ENCODE measurements at regions of chr9 and their contacts with region 1.

Region 1: DNA sequence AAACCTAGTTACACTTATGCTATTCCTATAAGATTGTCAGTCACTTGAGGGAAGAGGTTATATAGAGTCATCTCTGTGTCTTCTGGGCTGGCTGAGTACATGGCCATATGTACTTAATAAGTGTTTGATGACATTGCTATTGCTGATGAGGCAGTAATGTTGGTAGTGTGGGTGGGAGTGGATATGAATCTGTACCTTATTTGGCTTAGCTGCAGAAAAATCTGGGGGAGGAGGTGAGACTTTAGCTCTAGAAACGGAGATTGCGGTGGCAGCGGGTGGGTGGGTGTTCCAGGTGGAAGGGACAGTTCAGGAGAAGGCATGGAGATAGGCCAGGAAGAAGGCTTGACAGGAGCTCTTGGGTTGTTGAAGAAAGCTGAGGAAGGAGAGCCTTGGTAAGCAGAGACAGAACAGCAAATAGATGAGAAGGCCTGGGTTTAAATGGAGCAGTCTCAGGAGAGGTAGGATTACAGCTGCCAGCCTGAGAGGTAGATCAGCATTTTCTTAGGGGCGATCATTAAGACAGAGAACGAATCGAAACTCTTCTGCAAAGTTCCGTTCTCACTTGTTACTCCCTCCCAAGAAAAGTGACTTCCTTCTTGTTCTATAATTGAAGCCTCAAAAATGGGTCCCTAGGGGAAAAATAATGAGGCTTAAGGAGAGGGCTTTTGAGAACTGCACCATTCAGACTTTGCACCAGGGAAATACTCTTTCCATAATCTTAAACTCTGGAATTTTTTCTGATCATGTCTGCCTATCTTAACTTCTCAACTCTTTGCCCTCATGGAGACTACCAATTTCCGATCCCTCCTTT is 160.5 kb downstream of the UNC13B start:
- DNase-seq: no peak
- ATAC-seq: no peak
- H3K4me3 ChIP-seq: no peak overlapping the region
- H3K27ac ChIP-seq: no peak overlapping the region
- H3K4me1 ChIP-seq: no peaks in the 10 kb centered on the region
- H3K27me3 ChIP-seq: no peaks in the 10 kb centered on the region
- CTCF ChIP-seq: no peak
- POLR2A ChIP-seq: no peak
- RAD21 ChIP-seq: no peak

Region 2: GRCh38 chr9:34665381-34666250 is 656.7 kb before region 1 on chr9:
- CTCF ChIA-PET with region 1: no interaction called
- POLR2A ChIA-PET with region 1: no interaction called
- RAD21 ChIA-PET with region 1: no interaction called
- intact Hi-C with region 1: no loop called
- DNase-seq: peak; percentile 92
- ATAC-seq: peak; percentile 83
- H3K4me3 ChIP-seq: peak overlapping the region; percentile 91
- H3K27ac ChIP-seq: peak overlapping the region; percentile 88
- H3K4me1 ChIP-seq: peaks cover 10 to 27% of the 10 kb centered on the region in 2 experiments
- H3K27me3 ChIP-seq: no peaks in the 10 kb centered on the region
- CTCF ChIP-seq: no peak
- POLR2A ChIP-seq: peak; percentile 69
- RAD21 ChIP-seq: no peak

Region 3: DNA sequence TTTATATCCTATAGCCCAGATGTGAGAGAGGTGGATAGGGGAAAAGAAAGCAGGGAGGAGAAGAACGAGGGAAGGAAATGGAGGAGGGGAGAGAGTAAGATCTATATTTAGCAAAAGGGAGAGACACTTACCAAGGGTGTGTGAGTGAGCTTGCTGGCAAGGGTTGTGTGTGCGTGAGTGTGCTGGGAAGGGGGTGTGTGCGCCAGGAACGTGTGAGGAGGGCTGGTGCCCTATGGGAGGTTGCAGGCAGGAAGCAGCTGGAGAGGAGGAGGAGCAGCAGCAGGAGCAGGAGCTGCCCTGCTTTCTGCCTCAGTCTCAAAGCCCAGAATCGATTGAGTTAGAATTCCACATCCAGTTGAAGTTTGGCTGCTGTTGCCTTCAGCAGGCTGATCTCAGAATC is 19.3 kb after region 1 on chr9:
- CTCF ChIA-PET with region 1: no interaction called
- POLR2A ChIA-PET with region 1: no interaction called
- RAD21 ChIA-PET with region 1: no interaction called
- intact Hi-C with region 1: no loop called
- DNase-seq: no peak
- ATAC-seq: no peak
- H3K4me3 ChIP-seq: no peak overlapping the region
- H3K27ac ChIP-seq: no peak overlapping the region
- H3K4me1 ChIP-seq: no peaks in the 10 kb centered on the region
- H3K27me3 ChIP-seq: no peaks in the 10 kb centered on the region
- CTCF ChIP-seq: no peak
- POLR2A ChIP-seq: no peak
- RAD21 ChIP-seq: no peak

Region 4: GRCh38 chr9:35452481-35452880 is 130.2 kb after region 1 on chr9:
- CTCF ChIA-PET with region 1: no interaction called
- POLR2A ChIA-PET with region 1: no interaction called
- RAD21 ChIA-PET with region 1: no interaction called
- intact Hi-C with region 1: loop called (anchors 10 kb)
- DNase-seq: no peak
- ATAC-seq: peak; percentile 68; the same call in 1 of the 2 replicates
- H3K4me3 ChIP-seq: no peak overlapping the region
- H3K27ac ChIP-seq: no peak overlapping the region
- H3K4me1 ChIP-seq: peaks cover 0 to 11% of the 10 kb centered on the region in 2 experiments; a peak in 1 of 4 replicates
- H3K27me3 ChIP-seq: peaks cover 21% of the 10 kb centered on the region
- CTCF ChIP-seq: peak in 2 of 3 experiments; percentile 21 to 38; a peak in 3 of 6 replicates
- POLR2A ChIP-seq: no peak
- RAD21 ChIP-seq: 0 out of 2 replicates have a peak, but pooled peaks have one; percentile 20

Measured in HCT116 (cell line).